Posterior vena cava (tissue), 2 donors: ENCODE measurements at regions of chr3 and their contacts with region 1.

Region 1: GRCh38 chr3:142993958-142994442 is 7.4 kb upstream of the U2SURP start:
- DNase-seq: no peak

Region 2: GRCh38 chr3:142586803-142587406 is 407.1 kb before region 1 on chr3:
- intact Hi-C with region 1: loop called in 1 of 2 experiments (anchors 10 kb)
- DNase-seq: no peak

Region 3: GRCh38 chr3:142828703-142829305 is 165.2 kb before region 1 on chr3:
- intact Hi-C with region 1: loop called in 1 of 2 experiments (anchors 5 kb)
- DNase-seq: peak; percentile 95